Activated B cell treated with CpG ODN at 0.5 μM for 24 hours (primary cell): ENCODE measurements at regions of chr1 and their contacts with region 1.

Region 1: DNA sequence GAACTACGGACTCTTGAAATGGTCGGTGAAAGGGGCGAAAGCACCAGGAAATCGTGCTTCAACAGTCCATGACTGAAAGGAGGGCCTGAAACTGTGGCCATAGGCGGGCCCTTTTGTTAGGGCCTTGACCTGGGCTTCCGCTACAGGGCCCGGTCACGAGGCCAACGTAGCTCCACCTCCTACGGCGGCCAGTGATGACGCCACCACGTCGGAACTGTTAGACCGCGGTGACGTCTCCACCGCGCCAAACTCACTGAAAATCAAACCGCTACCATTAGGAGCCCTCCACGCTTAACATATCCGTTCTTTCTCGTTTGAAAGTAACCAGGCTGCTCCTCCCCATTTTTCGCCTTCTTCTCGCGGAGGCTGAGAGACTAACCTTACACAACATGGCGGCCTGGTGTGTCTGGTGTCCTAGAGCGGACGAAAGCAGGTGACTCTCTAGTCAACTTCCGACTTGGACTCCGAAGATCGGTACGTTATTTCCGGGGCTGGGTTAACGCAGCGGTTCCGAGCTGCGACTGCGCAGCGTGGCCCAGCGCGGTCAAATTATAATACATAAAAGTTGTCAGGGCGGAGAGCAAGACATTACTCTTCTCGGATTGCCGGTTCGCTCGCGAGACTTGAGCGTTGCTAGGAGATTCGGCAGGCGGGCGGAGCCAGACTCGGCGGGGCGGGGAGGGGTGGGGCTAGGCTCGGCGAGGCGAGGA is 376 bp upstream of the CACYBP start:
- DNase-seq: peak; percentile 88
- ATAC-seq: peak; percentile 78
- H3K4me3 Mint-ChIP-seq: no peak overlapping the region
- H3K27ac Mint-ChIP-seq: no peak overlapping the region
- H3K4me1 Mint-ChIP-seq: peaks cover 38% of the 10 kb centered on the region
- H3K27me3 Mint-ChIP-seq: no peaks in the 10 kb centered on the region
- CTCF ChIP-seq: no peak

Region 2: DNA sequence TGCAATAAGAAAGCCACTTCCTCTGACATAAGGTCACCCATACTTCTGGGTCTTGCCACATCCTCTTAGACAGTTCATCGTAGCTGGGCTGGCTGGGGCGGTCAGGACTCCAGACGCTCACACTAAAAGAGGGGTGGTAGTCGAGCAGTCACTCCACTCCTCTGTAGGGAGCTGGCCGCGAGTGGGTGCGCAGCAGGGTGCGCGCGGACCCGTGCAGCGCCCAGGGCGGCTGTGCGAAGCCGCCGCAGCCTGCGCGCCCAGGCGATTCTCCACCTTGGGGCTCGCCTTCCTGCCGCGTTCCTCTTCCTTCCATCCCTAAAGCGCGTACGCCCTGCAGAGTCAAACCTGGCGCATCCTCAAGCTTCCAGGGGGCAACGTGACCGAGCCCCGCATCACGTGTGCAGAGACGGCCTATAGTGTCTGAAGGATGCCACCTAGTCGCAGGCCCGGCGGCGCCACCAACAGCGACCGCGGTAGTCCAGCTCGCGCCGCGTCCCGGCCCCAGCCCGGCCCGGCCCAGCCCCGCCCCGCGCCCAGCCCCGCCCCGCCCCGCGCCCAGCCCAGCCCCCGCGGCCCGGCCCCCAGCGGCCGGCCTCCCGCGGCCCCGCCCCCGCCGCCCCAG is 1522.6 kb before region 1 on chr1:
- CTCF ChIA-PET with region 1: no interaction called
- POLR2A ChIA-PET with region 1: interaction called, 7 read pairs
- intact Hi-C with region 1: loop called (anchors 1 kb)
- DNase-seq: peak; percentile 70
- ATAC-seq: peak; percentile 94
- H3K4me3 Mint-ChIP-seq: peak overlapping the region; percentile 92
- H3K27ac Mint-ChIP-seq: peak overlapping the region; percentile 95
- H3K4me1 Mint-ChIP-seq: peaks cover 40% of the 10 kb centered on the region
- H3K27me3 Mint-ChIP-seq: no peaks in the 10 kb centered on the region
- CTCF ChIP-seq: no peak

Region 3: GRCh38 chr1:174022080-174022975 is 977.0 kb before region 1 on chr1 and contains the start of gene RC3H1:
- CTCF ChIA-PET with region 1: no interaction called
- POLR2A ChIA-PET with region 1: interaction called, 7 read pairs
- intact Hi-C with region 1: loop called (anchors 1 kb)
- DNase-seq: peak; percentile 88
- ATAC-seq: peak; percentile 93
- H3K4me3 Mint-ChIP-seq: peak within 1 kb of the TSS; percentile 97
- H3K27ac Mint-ChIP-seq: peak within 1 kb of the TSS; percentile 96
- H3K4me1 Mint-ChIP-seq: peaks cover 42% of the 10 kb centered on the region
- H3K27me3 Mint-ChIP-seq: no peaks in the 10 kb centered on the region
- CTCF ChIP-seq: no peak
- total RNA-seq, gene RC3H1: 45.6 and 55.6 TPM in 2 replicates

Region 4: GRCh38 chr1:174569240-174569639 is 430.1 kb before region 1 on chr1:
- CTCF ChIA-PET with region 1: no interaction called
- POLR2A ChIA-PET with region 1: no interaction called
- intact Hi-C with region 1: no loop called
- DNase-seq: no peak
- ATAC-seq: no peak
- H3K4me3 Mint-ChIP-seq: no peak overlapping the region
- H3K27ac Mint-ChIP-seq: no peak overlapping the region
- H3K4me1 Mint-ChIP-seq: peaks cover 10% of the 10 kb centered on the region
- H3K27me3 Mint-ChIP-seq: no peaks in the 10 kb centered on the region
- CTCF ChIP-seq: no peak

Region 5: GRCh38 chr1:174769961-174770549 is 229.3 kb before region 1 on chr1:
- CTCF ChIA-PET with region 1: interaction called, 12 read pairs
- POLR2A ChIA-PET with region 1: interaction called, 3 read pairs
- intact Hi-C with region 1: loop called (anchors 1 kb)
- DNase-seq: no peak
- ATAC-seq: peak; percentile 52
- H3K4me3 Mint-ChIP-seq: no peak overlapping the region
- H3K27ac Mint-ChIP-seq: no peak overlapping the region
- H3K4me1 Mint-ChIP-seq: peaks cover 6% of the 10 kb centered on the region
- H3K27me3 Mint-ChIP-seq: no peaks in the 10 kb centered on the region
- CTCF ChIP-seq: no peak

Region 6: DNA sequence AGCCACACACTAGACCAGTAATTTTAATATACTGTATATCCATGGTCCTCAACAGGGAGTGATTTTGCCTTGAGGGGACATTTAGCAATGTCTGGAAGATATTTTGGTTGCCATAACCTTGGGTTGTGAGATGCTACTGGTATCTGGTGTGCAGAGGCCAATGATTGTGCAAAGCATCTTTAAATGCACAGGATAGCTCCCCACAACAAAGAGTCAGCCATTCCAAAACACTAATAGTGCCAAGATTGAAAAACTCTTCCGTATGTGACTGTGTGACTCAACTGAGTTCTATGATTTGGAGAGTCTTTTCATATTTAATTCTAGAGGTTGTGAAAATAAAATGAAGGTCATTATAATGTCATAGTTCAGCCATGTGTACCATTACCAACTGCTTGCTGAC is 141.1 kb before region 1 on chr1:
- CTCF ChIA-PET with region 1: no interaction called
- POLR2A ChIA-PET with region 1: interaction called, 14 read pairs
- intact Hi-C with region 1: no loop called
- DNase-seq: no peak
- ATAC-seq: no peak
- H3K4me3 Mint-ChIP-seq: no peak overlapping the region
- H3K27ac Mint-ChIP-seq: no peak overlapping the region
- H3K4me1 Mint-ChIP-seq: no peaks in the 10 kb centered on the region
- H3K27me3 Mint-ChIP-seq: no peaks in the 10 kb centered on the region
- CTCF ChIP-seq: no peak

Region 7: GRCh38 chr1:174968750-174969244 is 30.6 kb before region 1 on chr1:
- CTCF ChIA-PET with region 1: interaction called, 3 read pairs
- POLR2A ChIA-PET with region 1: interaction called, 34 read pairs
- intact Hi-C with region 1: loop called (anchors 2 kb)
- DNase-seq: no peak
- ATAC-seq: peak; percentile 64
- H3K4me3 Mint-ChIP-seq: peak overlapping the region; percentile 73
- H3K27ac Mint-ChIP-seq: peak overlapping the region; percentile 85
- H3K4me1 Mint-ChIP-seq: peaks cover 68% of the 10 kb centered on the region
- H3K27me3 Mint-ChIP-seq: no peaks in the 10 kb centered on the region
- CTCF ChIP-seq: no peak

Region 8: GRCh38 chr1:176206961-176207902 is 1207.9 kb after region 1 on chr1 and contains the start of gene COP1:
- CTCF ChIA-PET with region 1: no interaction called
- POLR2A ChIA-PET with region 1: no interaction called
- intact Hi-C with region 1: loop called (anchors 1 kb)
- DNase-seq: peak; percentile 92
- ATAC-seq: peak; percentile 82
- H3K4me3 Mint-ChIP-seq: peak within 1 kb of the TSS; percentile 95
- H3K27ac Mint-ChIP-seq: peak within 1 kb of the TSS; percentile 97
- H3K4me1 Mint-ChIP-seq: peaks cover 50% of the 10 kb centered on the region
- H3K27me3 Mint-ChIP-seq: peaks cover 2% of the 10 kb centered on the region
- CTCF ChIP-seq: no peak
- total RNA-seq, gene COP1: 46.3 and 52.1 TPM in 2 replicates